ENCODE measurements at regions of chr21 and their contacts with region 1.

Region 1: GRCh38 chr21:36060159-36060921 is at the start of gene SETD4:
- DNase-seq: peak; percentile 97
- ATAC-seq: peak; percentile 97
- total RNA-seq, gene SETD4: 9.8 TPM

Region 2: DNA sequence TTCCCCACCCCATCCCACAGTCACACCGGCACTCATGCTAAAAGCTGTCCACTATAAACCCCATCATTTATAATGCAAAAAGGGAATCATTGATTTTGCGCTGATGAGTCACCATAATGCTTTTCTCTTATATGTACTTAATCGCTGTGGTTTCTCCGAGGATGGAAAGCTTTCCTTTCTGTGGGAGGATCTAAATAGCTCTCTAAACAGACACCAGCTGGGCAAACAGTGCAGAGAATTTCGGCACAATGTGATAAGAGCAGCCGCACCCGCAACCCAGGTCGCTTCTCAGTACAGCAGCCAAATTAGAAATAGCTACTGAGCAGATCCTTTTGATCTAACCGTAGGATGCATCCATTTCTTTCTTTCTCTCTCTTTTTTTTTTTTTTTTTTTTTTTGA is 85.5 kb before region 1 on chr21:
- intact Hi-C with region 1: no loop called
- DNase-seq: no peak
- ATAC-seq: no peak

Region 3: DNA sequence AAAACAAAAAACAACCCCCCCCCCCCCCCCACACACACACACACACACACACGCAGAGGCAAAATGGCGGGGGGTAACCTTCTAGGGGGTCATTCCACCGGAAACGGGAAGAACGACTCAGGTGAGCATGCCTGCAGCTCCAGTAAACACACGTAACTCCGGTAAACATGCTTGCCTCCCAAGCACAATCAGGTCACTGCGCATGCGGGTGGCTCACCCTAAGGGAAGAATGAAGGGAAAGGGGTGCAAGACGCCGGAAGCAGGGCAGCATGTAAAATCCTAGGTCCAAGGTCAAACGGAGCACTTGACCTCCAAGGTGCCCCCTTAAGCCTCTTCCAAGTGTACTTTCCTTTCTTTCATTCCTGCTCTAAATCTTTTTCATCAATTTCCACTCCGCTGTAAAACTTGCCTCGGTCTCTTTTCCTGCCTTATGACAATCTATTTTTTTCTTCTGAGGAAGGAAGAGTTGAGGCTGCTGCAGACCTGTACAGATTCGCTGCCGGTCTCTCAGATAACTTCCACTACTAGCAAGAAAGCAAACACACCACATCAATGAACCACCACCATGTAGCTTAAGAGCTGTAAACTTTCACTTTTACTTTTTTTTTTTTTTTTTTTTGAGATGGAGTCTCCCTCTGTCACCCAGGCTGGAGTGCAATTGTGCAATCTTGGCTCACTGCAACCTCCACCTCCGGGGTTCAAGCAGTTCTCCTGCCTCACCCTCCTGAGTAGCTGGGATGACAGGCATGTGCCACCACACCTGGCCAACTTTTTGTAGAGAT is 53.5 kb after region 1 on chr21:
- intact Hi-C with region 1: loop called (anchors 5 kb)
- DNase-seq: no peak
- ATAC-seq: no peak